H1 (cell line): ENCODE measurements at regions of chr5 and their contacts with region 1.

Region 1: GRCh38 chr5:146426853-146427618 is 20.1 kb upstream of the TCERG1 start:
- DNase-seq: no peak
- H3K4me3 ChIP-seq: no peak overlapping the region
- H3K27ac ChIP-seq: no peak overlapping the region
- H3K4me1 ChIP-seq: no peaks in the 10 kb centered on the region; a peak in 1 of 7 replicates
- H3K27me3 ChIP-seq: no peaks in the 10 kb centered on the region; a peak in 1 of 7 replicates
- CTCF ChIP-seq: peak in 2 of 3 experiments; percentile 59 to 68; a peak in 2 of 4 replicates
- EP300 ChIP-seq: no peak
- POLR2A ChIP-seq: no peak
- RAD21 ChIP-seq: peak; percentile 89

Region 2: DNA sequence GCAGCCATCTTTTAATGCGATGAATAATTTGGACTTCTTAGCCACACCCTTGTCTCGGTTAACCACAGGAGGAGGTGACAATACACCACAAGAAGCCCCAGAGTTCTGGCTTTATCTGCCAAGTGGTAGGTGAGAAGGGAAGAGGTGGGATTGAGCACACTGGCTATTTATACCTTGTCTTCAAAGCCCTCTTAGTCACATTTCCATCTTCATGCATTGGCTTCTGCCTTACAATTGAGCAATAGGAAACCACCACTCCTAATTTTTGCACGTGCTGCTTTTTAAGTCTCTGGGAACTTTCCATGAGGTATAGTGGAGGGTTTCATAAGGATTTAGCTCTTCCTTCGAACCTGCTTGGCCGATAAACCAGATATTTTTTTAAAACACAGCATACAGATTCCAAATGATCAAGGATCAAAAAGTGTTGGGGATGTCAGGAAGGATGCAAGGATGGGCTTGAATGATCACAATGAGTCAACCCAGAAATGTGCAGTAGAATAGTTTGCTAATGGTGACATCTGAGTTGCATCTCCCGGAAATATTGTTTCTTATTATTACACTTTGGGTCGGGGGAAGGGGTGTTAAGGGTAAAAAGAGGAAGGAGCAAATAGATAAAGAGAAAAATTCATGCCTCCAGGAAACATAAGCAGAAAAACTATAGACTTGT is 347.2 kb before region 1 on chr5:
- CTCF ChIA-PET with region 1: no interaction called
- POLR2A ChIA-PET with region 1: no interaction called
- DNase-seq: no peak
- H3K4me3 ChIP-seq: no peak overlapping the region
- H3K27ac ChIP-seq: no peak overlapping the region
- H3K4me1 ChIP-seq: peaks cover 0 to 21% (median 14%) of the 10 kb centered on the region in 4 experiments; a peak in 6 of 7 replicates
- H3K27me3 ChIP-seq: no peaks in the 10 kb centered on the region; a peak in 1 of 7 replicates
- CTCF ChIP-seq: no peak
- EP300 ChIP-seq: no peak
- POLR2A ChIP-seq: no peak
- RAD21 ChIP-seq: no peak

Region 3: GRCh38 chr5:146301626-146302025 is 125.4 kb before region 1 on chr5:
- CTCF ChIA-PET with region 1: interaction called, 13 read pairs
- POLR2A ChIA-PET with region 1: no interaction called
- DNase-seq: no peak
- H3K4me3 ChIP-seq: no peak overlapping the region
- H3K27ac ChIP-seq: no peak overlapping the region
- H3K4me1 ChIP-seq: no peaks in the 10 kb centered on the region
- H3K27me3 ChIP-seq: no peaks in the 10 kb centered on the region
- CTCF ChIP-seq: no peak
- EP300 ChIP-seq: no peak
- POLR2A ChIP-seq: no peak
- RAD21 ChIP-seq: no peak

Region 4: GRCh38 chr5:146334074-146334533 is 92.9 kb before region 1 on chr5:
- CTCF ChIA-PET with region 1: interaction called, 15 read pairs
- POLR2A ChIA-PET with region 1: no interaction called
- DNase-seq: peak in 1 of 2 experiments; percentile 65
- H3K4me3 ChIP-seq: peak overlapping the region in 3 of 4 experiments; percentile 9 to 48 (median 32); a peak in 4 of 8 replicates
- H3K27ac ChIP-seq: no peak overlapping the region
- H3K4me1 ChIP-seq: peaks cover 10 to 24% (median 16%) of the 10 kb centered on the region in 4 experiments
- H3K27me3 ChIP-seq: peaks cover 70 to 81% (median 75%) of the 10 kb centered on the region in 4 experiments
- CTCF ChIP-seq: no peak
- EP300 ChIP-seq: no peak
- POLR2A ChIP-seq: no peak
- RAD21 ChIP-seq: no peak

Region 5: GRCh38 chr5:146390469-146390868 is 36.6 kb before region 1 on chr5:
- CTCF ChIA-PET with region 1: interaction called, 54 read pairs
- POLR2A ChIA-PET with region 1: no interaction called
- DNase-seq: peak in 1 of 2 experiments; percentile 59
- H3K4me3 ChIP-seq: no peak overlapping the region
- H3K27ac ChIP-seq: no peak overlapping the region
- H3K4me1 ChIP-seq: peaks cover 0 to 5% (median under 1%) of the 10 kb centered on the region in 4 experiments; a peak in 1 of 7 replicates
- H3K27me3 ChIP-seq: no peaks in the 10 kb centered on the region; a peak in 1 of 7 replicates
- CTCF ChIP-seq: peak; percentile 89 to 99 (median 92)
- EP300 ChIP-seq: no peak
- POLR2A ChIP-seq: no peak
- RAD21 ChIP-seq: peak; percentile 86 to 87

Region 6: GRCh38 chr5:146409054-146409671 is 17.9 kb before region 1 on chr5:
- CTCF ChIA-PET with region 1: interaction called, 37 read pairs
- POLR2A ChIA-PET with region 1: interaction called, 3 read pairs
- DNase-seq: no peak
- H3K4me3 ChIP-seq: no peak overlapping the region
- H3K27ac ChIP-seq: no peak overlapping the region
- H3K4me1 ChIP-seq: no peaks in the 10 kb centered on the region; a peak in 2 of 7 replicates
- H3K27me3 ChIP-seq: no peaks in the 10 kb centered on the region
- CTCF ChIP-seq: no peak
- EP300 ChIP-seq: no peak
- POLR2A ChIP-seq: no peak
- RAD21 ChIP-seq: no peak

Region 7: GRCh38 chr5:146475190-146475801 is 48.3 kb after region 1 on chr5:
- CTCF ChIA-PET with region 1: no interaction called
- POLR2A ChIA-PET with region 1: no interaction called
- DNase-seq: no peak
- H3K4me3 ChIP-seq: no peak overlapping the region
- H3K27ac ChIP-seq: no peak overlapping the region
- H3K4me1 ChIP-seq: no peaks in the 10 kb centered on the region
- H3K27me3 ChIP-seq: no peaks in the 10 kb centered on the region
- CTCF ChIP-seq: no peak
- EP300 ChIP-seq: no peak
- POLR2A ChIP-seq: no peak
- RAD21 ChIP-seq: no peak

Region 8: GRCh38 chr5:146588326-146589027 is 161.4 kb after region 1 on chr5:
- CTCF ChIA-PET with region 1: no interaction called
- POLR2A ChIA-PET with region 1: no interaction called
- DNase-seq: no peak
- H3K4me3 ChIP-seq: no peak overlapping the region
- H3K27ac ChIP-seq: no peak overlapping the region
- H3K4me1 ChIP-seq: no peaks in the 10 kb centered on the region
- H3K27me3 ChIP-seq: no peaks in the 10 kb centered on the region
- CTCF ChIP-seq: no peak
- EP300 ChIP-seq: no peak
- POLR2A ChIP-seq: no peak
- RAD21 ChIP-seq: no peak